ENCODE measurements at regions of chr3 and their contacts with region 1.

Region 1: DNA sequence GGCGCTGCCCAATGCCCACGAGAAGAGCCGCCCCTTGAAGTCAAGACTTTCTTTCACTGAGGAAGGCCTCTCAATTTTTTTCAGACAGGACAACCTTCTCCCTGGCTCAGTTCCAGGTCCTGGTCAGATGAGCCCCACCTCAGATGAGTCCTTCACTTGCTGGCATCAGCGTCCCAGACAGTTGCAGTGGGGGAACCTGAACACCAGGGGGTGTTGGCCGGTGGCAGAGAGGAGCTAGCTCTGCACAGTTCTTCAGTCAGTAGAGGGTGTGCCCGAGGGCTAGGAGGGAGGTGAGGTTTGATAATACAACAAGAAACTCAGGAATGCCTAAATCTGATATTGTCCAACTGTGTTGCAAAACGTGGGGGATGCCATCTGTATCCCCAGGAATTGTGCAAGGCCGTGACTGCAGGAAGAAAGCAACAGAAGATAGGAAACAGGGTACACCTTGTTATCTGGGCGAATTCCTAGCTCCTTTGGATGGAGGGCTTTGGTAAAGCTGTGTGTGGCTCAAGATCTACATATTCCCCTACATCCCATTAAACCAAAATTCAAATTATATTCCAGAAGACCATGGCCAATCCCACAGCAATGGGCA is 34.3 kb downstream of the CCR3 start:
- DNase-seq: peak; percentile 51 to 78 (median 56)
- ATAC-seq: peak in 3 of 4 donors; percentile 77 to 78 (median 78)
- H3K4me3 ChIP-seq: no peak overlapping the region
- H3K27ac ChIP-seq: no peak overlapping the region
- H3K4me1 ChIP-seq: peaks cover 0 to 32% (median 0%) of the 10 kb centered on the region in 12 donors
- H3K27me3 ChIP-seq: no peaks in the 10 kb centered on the region
- CTCF ChIP-seq: peak; percentile 37 to 69 (median 55)
- POLR2A ChIP-seq: no peak

Region 2: GRCh38 chr3:45712472-45713110 is 564.0 kb before region 1 on chr3:
- intact Hi-C with region 1: no loop called
- DNase-seq: no peak
- ATAC-seq: no peak
- H3K4me3 ChIP-seq: no peak overlapping the region
- H3K27ac ChIP-seq: no peak overlapping the region
- H3K4me1 ChIP-seq: peaks cover 0 to 11% (median 0%) of the 10 kb centered on the region in 12 donors
- H3K27me3 ChIP-seq: no peaks in the 10 kb centered on the region
- CTCF ChIP-seq: no peak
- POLR2A ChIP-seq: no peak

Region 3: DNA sequence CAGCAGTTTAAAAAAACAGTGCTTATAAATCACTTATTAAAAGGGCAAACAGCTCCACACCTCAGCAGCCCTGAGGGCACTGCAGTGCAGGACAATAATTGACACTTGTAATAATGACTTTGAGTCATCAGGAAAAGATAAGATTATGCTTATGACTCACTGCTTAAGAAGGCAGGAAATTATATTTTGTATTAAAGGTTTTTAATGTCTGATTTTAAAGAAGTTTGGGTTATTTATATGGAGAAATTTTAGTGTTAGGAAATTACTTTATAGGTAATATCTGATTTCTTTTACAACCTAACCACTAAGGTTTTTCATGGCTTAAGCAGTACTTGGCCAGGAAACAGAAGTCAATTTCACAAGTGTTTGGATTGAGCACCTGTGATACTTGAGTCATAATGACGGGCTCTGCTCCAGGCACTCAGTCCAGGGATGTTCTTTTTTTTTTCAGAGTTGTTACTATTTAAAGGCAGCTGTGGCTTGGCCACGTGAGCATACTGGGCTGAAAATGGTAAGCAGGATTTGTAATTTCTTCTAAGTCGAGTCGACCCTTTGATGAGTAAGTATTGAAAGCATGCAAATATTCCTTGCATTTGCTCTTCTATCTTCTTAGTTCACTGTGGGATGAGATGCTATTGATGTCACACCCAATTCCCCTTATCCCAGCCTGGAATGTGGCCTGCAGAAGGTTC is 458.6 kb before region 1 on chr3:
- intact Hi-C with region 1: no loop called
- DNase-seq: peak in 3 of 5 donors; percentile 20 to 55 (median 51)
- ATAC-seq: peak; percentile 72 to 89 (median 88)
- H3K4me3 ChIP-seq: no peak overlapping the region
- H3K27ac ChIP-seq: peak overlapping the region in 5 of 12 donors; percentile 36 to 70 (median 50)
- H3K4me1 ChIP-seq: peaks cover 0 to 32% (median 18%) of the 10 kb centered on the region in 12 donors
- H3K27me3 ChIP-seq: no peaks in the 10 kb centered on the region
- CTCF ChIP-seq: no peak
- POLR2A ChIP-seq: no peak

Region 4: GRCh38 chr3:46368569-46368968 is 92.0 kb after region 1 on chr3:
- intact Hi-C with region 1: loop called in 2 of 10 experiments (anchors 2 to 10 kb)
- DNase-seq: peak; percentile 41 to 83 (median 55)
- ATAC-seq: peak; percentile 53 to 87 (median 72)
- H3K4me3 ChIP-seq: no peak overlapping the region
- H3K27ac ChIP-seq: peak overlapping the region in 1 of 12 donors; percentile 78
- H3K4me1 ChIP-seq: peaks cover 0 to 44% (median 0%) of the 10 kb centered on the region in 12 donors
- H3K27me3 ChIP-seq: peaks cover 0 to 41% (median 0%) of the 10 kb centered on the region in 9 donors
- CTCF ChIP-seq: peak in 6 of 12 donors; percentile 8 to 45 (median 24)
- POLR2A ChIP-seq: no peak

Region 5: DNA sequence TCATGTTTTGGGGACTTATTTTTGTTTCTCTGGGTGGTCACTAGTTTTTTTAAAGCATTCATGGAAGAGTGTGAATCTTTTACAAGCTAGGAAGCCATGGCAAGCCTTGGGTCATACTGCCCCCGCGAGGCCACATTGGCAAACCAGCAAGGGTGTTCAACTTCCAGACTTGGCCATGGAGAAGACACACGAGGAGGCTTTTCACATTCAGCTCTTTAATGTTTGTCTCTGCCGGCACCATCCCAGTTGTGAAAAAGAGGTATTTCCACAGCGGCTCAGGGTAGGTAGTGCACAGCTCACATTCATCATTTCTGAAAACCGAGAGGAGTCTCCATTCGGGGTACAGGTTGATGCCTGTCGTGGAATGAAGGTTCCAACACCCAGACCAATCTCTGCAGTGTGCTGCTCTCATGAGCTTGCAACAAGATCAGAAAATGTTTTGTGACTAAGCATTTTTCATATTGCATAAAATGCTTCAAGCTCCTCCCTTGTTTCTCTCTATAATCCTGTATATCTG is 101.9 kb after region 1 on chr3:
- intact Hi-C with region 1: loop called in 4 of 10 experiments (anchors 5 to 10 kb)
- DNase-seq: peak; percentile 42 to 79 (median 59)
- ATAC-seq: peak in 3 of 4 donors; percentile 50 to 78 (median 60)
- H3K4me3 ChIP-seq: no peak overlapping the region
- H3K27ac ChIP-seq: no peak overlapping the region
- H3K4me1 ChIP-seq: peaks cover 0 to 42% (median 3%) of the 10 kb centered on the region in 12 donors
- H3K27me3 ChIP-seq: peaks cover 0 to 9% (median 0%) of the 10 kb centered on the region in 9 donors
- CTCF ChIP-seq: peak; percentile 30 to 69 (median 54)
- POLR2A ChIP-seq: no peak

Region 6: DNA sequence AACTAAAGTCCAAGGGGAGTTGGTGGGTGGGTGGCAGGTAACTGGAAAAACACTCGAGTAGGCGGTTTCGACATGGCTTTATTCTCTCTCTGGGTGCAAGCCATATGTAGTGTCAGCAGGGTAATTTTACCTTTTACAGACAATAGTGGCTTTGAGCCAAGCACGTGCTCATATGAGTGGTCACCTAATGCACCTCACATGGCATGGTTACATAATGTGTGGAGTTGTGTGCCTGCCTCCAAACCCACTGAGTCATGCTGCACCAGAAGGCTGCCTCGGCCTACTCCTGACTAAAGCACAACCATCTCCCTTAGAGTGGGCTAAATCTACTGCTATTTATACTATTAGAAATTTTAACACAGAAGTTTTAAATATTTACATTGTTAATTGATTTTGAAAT is 147.0 kb after region 1 on chr3:
- intact Hi-C with region 1: loop called in 5 of 10 experiments (anchors 5 to 10 kb)
- DNase-seq: no peak
- ATAC-seq: no peak
- H3K4me3 ChIP-seq: no peak overlapping the region
- H3K27ac ChIP-seq: no peak overlapping the region
- H3K4me1 ChIP-seq: peaks cover 0 to 14% (median 0%) of the 10 kb centered on the region in 12 donors
- H3K27me3 ChIP-seq: no peaks in the 10 kb centered on the region
- CTCF ChIP-seq: no peak
- POLR2A ChIP-seq: no peak

Region 7: DNA sequence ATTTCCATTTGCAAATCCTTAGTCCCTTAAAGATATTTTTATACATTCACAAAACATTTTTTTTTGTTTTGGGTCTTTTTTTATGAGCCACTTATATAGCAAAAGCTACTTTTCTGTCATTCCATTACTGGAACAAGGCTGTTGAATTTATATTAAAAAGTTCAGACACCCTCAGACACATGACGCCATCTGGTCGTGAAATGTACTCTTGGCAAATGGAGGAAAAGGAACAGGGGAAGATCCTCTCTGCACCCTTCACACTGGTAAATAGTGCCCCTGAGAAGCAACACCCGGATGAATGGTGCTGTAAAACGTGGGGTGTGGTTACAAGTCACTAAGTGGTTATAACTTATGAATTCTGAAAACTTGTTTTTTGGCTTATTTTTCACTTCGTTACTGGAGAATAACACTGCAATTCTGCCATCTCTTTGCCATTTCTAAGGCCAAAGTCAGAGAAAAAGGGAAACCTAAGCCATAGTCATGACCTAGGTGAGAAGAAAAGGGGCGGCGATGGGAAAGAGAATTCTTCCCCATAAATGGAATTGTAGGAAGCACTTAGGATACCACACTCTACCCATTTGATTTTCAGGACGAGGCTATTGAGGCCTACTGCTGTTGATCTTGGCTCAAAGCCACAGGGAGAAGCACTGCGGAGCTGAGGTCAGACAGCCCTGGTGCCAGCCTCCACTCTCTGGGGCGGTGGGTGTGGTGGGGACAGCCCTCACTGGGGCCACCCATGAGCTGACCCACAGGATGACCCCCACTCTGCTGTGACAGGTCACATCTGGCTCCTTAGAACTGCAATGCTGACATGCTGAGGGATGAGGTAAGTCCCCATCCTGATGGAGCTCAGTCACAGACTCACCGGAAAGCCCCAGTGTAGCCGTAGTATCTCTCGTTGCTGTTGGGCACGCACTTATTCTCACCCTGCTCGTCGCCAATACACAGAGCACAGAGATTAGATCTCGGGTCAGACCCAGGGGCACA is 166.3 kb after region 1 on chr3:
- intact Hi-C with region 1: loop called in 1 of 10 experiments (anchors 5 kb)
- DNase-seq: no peak
- ATAC-seq: peak in 1 of 4 donors; percentile 16
- H3K4me3 ChIP-seq: no peak overlapping the region
- H3K27ac ChIP-seq: no peak overlapping the region
- H3K4me1 ChIP-seq: peaks cover 0 to 11% (median 0%) of the 10 kb centered on the region in 12 donors
- H3K27me3 ChIP-seq: no peaks in the 10 kb centered on the region
- CTCF ChIP-seq: peak in 5 of 12 donors; percentile 37 to 69 (median 51)
- POLR2A ChIP-seq: no peak

Region 8: GRCh38 chr3:46462111-46462510 is 185.5 kb after region 1 on chr3:
- intact Hi-C with region 1: no loop called
- DNase-seq: no peak
- ATAC-seq: peak in 3 of 4 donors; percentile 31 to 67 (median 39)
- H3K4me3 ChIP-seq: peak overlapping the region in 10 of 12 donors; percentile 22 to 50 (median 44)
- H3K27ac ChIP-seq: peak overlapping the region in 11 of 12 donors; percentile 52 to 82 (median 74)
- H3K4me1 ChIP-seq: peaks cover 0 to 34% (median 16%) of the 10 kb centered on the region in 12 donors
- H3K27me3 ChIP-seq: peaks cover 0 to 28% (median 0%) of the 10 kb centered on the region in 9 donors
- CTCF ChIP-seq: peak in 9 of 12 donors; percentile 22 to 41 (median 31)
- POLR2A ChIP-seq: no peak

Region 9: DNA sequence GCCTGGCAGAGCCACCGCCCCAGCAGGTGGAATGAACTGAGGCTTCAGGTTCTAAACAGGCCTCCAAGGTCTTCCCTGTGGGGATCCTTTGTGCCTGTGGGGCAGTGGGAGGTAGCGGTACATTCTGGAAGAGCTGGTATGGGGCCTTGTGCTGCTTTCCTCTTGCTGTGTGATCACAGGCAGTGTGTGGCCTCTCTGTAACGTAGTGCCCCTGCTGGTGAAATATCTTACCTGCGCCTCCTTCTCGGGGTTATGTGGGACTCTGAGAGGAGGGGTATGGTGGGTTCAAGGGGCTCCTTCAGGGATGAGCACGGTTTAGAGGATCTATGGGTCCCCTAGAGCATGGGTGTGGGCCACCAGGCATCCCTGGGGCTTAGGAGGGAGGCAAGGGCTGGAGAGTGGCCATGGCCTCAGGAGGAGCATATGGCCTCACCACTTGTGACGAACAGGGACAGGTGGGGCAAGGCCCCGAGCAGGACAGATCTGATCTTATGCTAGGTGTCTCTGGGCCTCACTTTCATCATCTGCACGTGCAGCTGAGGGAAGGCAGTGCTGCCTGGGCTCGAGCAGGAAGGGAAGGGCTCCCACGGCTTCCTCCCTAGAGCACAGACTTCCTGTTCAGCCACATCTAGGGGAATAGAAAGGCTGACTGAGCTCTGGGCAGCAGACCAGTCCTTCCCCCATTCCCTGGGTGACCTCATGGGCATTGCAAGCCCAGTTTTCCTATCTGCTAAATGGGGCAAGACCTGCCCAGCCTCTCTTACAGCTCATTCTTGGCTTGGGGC is 418.8 kb after region 1 on chr3:
- intact Hi-C with region 1: no loop called
- DNase-seq: peak; percentile 76 to 82 (median 79)
- ATAC-seq: peak; percentile 18 to 58 (median 32)
- H3K4me3 ChIP-seq: no peak overlapping the region
- H3K27ac ChIP-seq: peak overlapping the region; percentile 85 to 98 (median 94)
- H3K4me1 ChIP-seq: peaks cover 33 to 86% (median 78%) of the 10 kb centered on the region in 12 donors
- H3K27me3 ChIP-seq: no peaks in the 10 kb centered on the region
- CTCF ChIP-seq: peak in 5 of 12 donors; percentile 9 to 35 (median 27)
- POLR2A ChIP-seq: peak in 1 of 2 donors; percentile 28